GM18951 (cell line): ENCODE measurements at regions of chrX and their contacts with region 1.

Region 1: GRCh38 chrX:151680805-151681204 is 14.5 kb upstream of the PRRG3 start:
- POLR2A ChIP-seq: no peak

Region 2: DNA sequence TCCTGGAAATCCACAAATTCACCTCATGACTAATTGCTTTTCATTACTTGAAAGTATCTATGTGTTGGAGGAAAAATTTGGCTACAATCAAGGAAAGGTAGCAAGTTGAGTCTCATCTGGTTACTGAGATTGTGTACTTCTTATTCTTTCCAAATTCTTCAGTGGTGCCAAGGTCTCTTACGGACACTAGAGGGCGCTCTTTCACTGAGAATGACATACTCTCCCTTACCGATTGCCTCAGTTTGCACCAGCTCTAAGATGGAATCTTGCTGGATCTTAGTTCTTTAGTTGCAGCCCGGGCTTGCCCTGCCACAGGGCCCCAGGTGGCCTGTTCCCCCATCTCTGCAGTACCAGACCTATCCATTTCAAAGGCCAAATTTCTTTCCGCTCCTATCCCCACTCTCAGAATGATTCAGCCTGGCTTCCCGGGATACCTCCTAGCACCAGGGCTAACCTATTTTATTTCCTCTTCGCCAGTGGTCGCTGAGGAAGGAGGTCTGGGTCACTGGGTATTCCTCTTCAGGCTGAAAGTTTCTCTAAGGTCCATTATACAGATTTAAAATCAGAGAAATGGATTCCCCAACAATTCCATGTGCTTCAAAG is 529.0 kb before region 1 on chrX:
- in situ Hi-C with region 1: loop called (anchors 25 kb)
- POLR2A ChIP-seq: no peak

Region 3: DNA sequence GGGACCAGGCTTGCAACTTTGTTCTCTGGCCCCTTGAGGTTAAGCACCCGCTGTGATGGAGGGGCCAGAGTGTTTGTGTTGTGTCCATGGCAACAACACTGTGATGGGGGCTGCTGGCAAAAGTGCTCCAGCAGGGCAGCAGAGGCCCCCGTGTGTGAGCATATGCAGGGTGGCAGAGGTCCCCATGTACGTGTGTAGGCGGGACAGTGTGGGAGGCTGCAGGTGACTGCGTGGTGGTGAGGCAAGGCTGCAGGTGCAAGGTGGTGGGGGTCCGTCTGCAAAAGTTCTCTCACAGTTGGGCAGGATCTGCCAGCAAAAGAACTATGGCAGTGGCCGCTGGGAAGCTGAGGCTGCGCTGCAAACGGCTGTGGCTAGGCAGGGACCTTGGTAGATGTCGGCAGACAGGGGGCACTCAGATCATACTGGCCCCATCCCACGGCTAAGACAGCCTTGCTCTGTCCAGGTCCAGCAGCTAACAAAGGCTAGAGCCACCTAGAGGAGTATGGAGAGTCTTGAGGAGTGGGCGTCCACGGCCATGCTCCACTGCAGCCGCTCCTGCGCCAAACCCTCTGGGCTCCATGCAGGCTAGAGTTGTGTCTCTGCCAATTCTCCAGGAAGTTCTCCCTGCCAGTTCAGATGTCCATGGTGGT is 164.1 kb before region 1 on chrX:
- in situ Hi-C with region 1: no loop called
- POLR2A ChIP-seq: no peak